ENCODE measurements at regions of chr11 and their contacts with region 1.

Region 1: DNA sequence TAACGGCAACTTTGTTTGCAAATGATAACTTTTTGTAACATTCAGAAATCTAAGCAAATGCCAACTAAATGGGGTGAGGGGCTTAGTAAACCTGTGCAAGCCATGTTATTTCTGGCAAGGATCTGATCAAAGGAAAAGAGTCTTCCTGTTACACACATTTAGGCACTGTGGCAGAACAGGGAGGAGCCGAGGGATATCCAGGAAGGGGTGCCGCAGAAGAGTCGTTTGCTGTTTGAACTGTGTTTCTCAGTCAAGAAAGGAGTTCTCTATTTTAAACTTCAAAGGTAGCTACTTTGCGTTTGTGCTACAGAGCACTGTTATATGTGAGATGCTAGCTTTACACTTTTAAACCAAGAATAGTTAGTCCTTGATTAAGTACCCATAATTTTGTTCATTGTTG is 175.5 kb downstream of the ETS1 start:
- DNase-seq: peak in 12 of 35 experiments; percentile 6 to 49 (median 16)
- ATAC-seq: peak in 3 of 4 experiments; percentile 54 to 68 (median 66)
- H3K4me3 ChIP-seq: no peak overlapping the region
- H3K4me3 Mint-ChIP-seq: peak overlapping the region in 2 of 3 donors; percentile 42 to 54
- H3K27ac ChIP-seq: no peak overlapping the region
- H3K27ac Mint-ChIP-seq: peak overlapping the region; percentile 81 to 91
- H3K4me1 ChIP-seq: peaks cover 0 to 18% of the 10 kb centered on the region in 2 experiments
- H3K4me1 Mint-ChIP-seq: peaks cover 44 to 61% (median 58%) of the 10 kb centered on the region in 3 donors
- H3K27me3 ChIP-seq: no peaks in the 10 kb centered on the region
- H3K27me3 Mint-ChIP-seq: no peaks in the 10 kb centered on the region

Region 2: GRCh38 chr11:128244871-128245270 is 166.9 kb before region 1 on chr11:
- CTCF ChIA-PET with region 1: no interaction called
- POLR2A ChIA-PET with region 1: interaction called in 1 of 2 experiments, 13 read pairs
- DNase-seq: no peak
- ATAC-seq: no peak
- H3K4me3 ChIP-seq: no peak overlapping the region
- H3K4me3 Mint-ChIP-seq: no peak overlapping the region
- H3K27ac ChIP-seq: no peak overlapping the region
- H3K27ac Mint-ChIP-seq: no peak overlapping the region
- H3K4me1 ChIP-seq: no peaks in the 10 kb centered on the region
- H3K4me1 Mint-ChIP-seq: no peaks in the 10 kb centered on the region
- H3K27me3 ChIP-seq: no peaks in the 10 kb centered on the region
- H3K27me3 Mint-ChIP-seq: peaks cover 2 to 3% of the 10 kb centered on the region in 2 donors